Activated CD4-positive, alpha-beta T cell treated with anti-CD3 and anti-CD28 coated beads for 36 hours (primary cell): ENCODE measurements at regions of chr10 and their contacts with region 1.

Region 1: GRCh38 chr10:67849331-67850011 is 11.5 kb upstream of the DNAJC12 start:
- DNase-seq: peak; percentile 96
- ATAC-seq: peak; percentile 97
- H3K4me3 Mint-ChIP-seq: peak overlapping the region; percentile 86
- H3K27ac Mint-ChIP-seq: peak overlapping the region; percentile 95
- H3K4me1 Mint-ChIP-seq: peaks cover 12% of the 10 kb centered on the region
- H3K27me3 Mint-ChIP-seq: no peaks in the 10 kb centered on the region

Region 2: DNA sequence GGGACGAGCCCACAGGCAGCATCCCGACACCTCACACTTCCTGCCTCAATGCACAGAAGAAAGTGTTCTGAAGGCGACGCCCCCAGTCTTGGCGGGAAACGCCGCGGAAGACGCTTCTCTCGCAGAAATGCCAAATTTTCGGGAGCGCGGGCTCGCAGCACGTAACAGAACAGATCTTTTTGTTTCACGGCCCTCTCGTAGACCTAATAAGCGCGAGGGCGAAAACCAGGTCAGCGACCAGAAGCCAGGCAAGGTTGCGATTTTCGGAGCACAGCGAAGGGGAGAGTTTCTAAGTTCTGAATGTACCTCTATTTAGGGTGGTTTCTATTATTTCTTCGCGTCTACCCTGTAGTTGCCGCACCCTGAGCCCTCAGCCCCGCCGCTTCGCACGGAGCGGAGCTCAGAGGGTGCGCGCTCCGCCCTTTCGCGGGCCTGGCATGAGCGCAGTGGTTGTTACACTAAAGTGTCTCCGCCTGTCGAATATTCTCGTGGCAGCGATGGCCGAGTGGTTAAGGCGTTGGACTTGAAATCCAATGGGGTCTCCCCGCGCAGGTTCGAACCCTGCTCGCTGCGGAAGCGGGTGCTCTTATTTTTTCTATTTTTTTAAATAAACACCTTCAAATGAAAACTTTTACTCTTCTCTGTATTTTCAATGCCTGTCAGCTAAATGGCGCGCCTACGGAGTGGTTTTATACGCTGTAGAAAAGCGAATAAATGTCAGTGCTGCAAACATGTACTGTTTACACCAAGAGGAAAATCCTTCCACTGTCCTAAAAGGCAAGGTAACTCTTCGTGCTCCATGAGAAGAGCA is 85.3 kb before region 1 on chr10:
- CTCF ChIA-PET with region 1: no interaction called
- POLR2A ChIA-PET with region 1: no interaction called
- intact Hi-C with region 1: loop called (anchors 1 kb)
- DNase-seq: peak; percentile 96
- ATAC-seq: peak; percentile 86
- H3K4me3 Mint-ChIP-seq: peak overlapping the region; percentile 86
- H3K27ac Mint-ChIP-seq: peak overlapping the region; percentile 99
- H3K4me1 Mint-ChIP-seq: peaks cover 15% of the 10 kb centered on the region
- H3K27me3 Mint-ChIP-seq: peaks cover 2% of the 10 kb centered on the region

Region 3: GRCh38 chr10:67818320-67818719 is 31.2 kb before region 1 on chr10:
- CTCF ChIA-PET with region 1: interaction called, 6 read pairs
- POLR2A ChIA-PET with region 1: no interaction called
- intact Hi-C with region 1: loop called in 1 of 2 experiments (anchors 2 kb)
- DNase-seq: no peak
- ATAC-seq: peak; percentile 16
- H3K4me3 Mint-ChIP-seq: no peak overlapping the region
- H3K27ac Mint-ChIP-seq: no peak overlapping the region
- H3K4me1 Mint-ChIP-seq: peaks cover 29% of the 10 kb centered on the region
- H3K27me3 Mint-ChIP-seq: peaks cover 3% of the 10 kb centered on the region

Region 4: DNA sequence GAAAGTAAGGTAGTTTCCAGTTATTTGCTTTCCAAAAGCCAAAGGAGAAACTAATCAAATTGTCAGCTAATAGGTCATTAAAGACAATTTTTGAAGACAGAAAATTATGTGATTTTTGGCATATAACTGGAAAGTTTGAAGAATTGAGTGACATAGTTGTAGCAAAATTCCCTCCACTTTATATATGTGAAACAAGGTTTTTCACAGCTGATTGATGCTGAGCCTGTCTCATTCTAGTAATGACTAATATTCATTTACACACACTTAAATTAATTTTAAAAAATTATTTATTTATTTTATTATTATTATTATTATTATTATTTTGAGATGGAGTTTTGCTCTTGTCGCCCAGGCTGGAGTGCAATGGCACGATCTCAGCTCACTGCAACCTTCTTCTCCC is 18.7 kb after region 1 on chr10:
- CTCF ChIA-PET with region 1: interaction called, 17 read pairs
- POLR2A ChIA-PET with region 1: no interaction called
- intact Hi-C with region 1: no loop called
- DNase-seq: no peak
- ATAC-seq: no peak
- H3K4me3 Mint-ChIP-seq: no peak overlapping the region
- H3K27ac Mint-ChIP-seq: no peak overlapping the region
- H3K4me1 Mint-ChIP-seq: no peaks in the 10 kb centered on the region
- H3K27me3 Mint-ChIP-seq: no peaks in the 10 kb centered on the region

Region 5: GRCh38 chr10:67959839-67960476 is 110.5 kb after region 1 on chr10:
- CTCF ChIA-PET with region 1: no interaction called
- POLR2A ChIA-PET with region 1: no interaction called
- intact Hi-C with region 1: no loop called
- DNase-seq: no peak
- ATAC-seq: no peak
- H3K4me3 Mint-ChIP-seq: no peak overlapping the region
- H3K27ac Mint-ChIP-seq: no peak overlapping the region
- H3K4me1 Mint-ChIP-seq: no peaks in the 10 kb centered on the region
- H3K27me3 Mint-ChIP-seq: no peaks in the 10 kb centered on the region

Region 6: DNA sequence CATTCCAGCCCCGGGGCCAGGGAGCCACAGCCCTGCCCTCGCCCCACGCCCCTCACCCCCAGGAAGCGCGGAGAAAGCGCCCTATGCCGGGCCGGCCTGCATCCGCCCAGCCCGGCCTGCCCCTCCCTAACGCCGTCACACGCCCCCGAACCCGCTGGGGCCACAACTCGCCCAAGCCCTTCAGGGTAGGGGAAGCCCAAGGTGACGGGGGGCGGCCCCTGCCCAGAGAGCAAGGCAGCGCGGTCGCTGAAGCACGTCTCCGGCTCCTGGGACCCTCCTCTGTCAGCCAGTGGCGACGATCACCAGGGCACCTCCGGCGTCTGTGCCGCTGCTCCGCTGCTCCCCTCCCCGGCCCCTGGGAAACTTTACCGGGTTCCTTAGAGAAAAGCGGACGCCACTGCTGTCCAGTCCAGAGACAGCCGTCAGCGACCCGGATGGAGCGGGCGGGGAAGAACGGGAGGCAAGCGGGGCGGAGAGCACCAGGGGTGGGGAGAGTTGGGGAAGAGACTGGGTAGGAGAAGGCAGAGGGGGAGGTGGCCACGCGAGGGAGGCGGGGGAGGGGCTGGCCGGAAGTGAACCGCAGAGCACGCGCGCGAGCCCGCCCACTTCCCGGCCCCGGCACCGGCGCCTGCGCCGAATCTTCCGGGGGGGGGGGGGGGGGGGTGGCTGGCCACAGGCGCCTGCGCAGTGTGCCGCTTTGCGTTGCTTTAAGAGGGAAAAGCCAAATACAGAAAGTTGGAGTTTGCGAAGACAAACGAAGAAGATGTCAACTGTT is 225.5 kb after region 1 on chr10 and contains the start of gene HERC4:
- CTCF ChIA-PET with region 1: no interaction called
- POLR2A ChIA-PET with region 1: no interaction called
- intact Hi-C with region 1: loop called in 1 of 2 experiments (anchors 1 kb)
- DNase-seq: peak; percentile 94
- ATAC-seq: peak; percentile 83
- H3K4me3 Mint-ChIP-seq: peak within 1 kb of the TSS; percentile 98
- H3K27ac Mint-ChIP-seq: peak within 1 kb of the TSS; percentile 93
- H3K4me1 Mint-ChIP-seq: peaks cover 31% of the 10 kb centered on the region
- H3K27me3 Mint-ChIP-seq: no peaks in the 10 kb centered on the region
- total RNA-seq, gene HERC4: 39.5 to 50.8 TPM

Region 7: DNA sequence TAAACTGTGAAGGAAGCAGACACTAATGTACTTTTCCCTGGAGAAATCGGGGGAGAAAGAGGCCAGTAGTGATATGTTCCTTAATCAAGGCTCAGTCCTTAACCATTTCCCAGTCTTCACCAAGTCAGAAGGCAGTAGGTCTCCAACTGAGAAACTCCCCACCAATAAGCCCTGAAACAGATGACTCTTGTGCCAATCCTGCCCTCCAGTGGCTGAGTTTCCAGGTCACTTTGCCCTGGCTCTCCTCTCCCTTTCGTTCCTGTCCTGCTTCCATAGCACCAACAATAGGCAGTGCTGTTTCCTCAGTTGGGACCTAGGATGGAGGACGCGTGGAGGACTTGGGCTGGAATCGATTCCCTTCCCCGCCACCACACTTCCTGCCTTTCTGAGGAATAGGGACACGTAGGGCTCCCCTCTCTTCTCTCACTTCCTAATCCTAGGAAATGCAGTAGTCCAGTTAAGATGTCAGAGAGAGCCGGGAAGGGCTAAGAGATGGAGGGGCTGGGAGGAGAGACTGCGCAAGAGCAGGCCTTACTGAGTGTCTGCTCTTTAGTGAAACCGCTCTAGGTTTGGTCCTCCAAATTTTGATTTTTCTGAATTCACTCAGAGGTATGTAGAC is 359.1 kb after region 1 on chr10:
- CTCF ChIA-PET with region 1: interaction called, 16 read pairs
- POLR2A ChIA-PET with region 1: no interaction called
- intact Hi-C with region 1: loop called in 1 of 2 experiments (anchors 2 kb)
- DNase-seq: peak; percentile 53
- ATAC-seq: peak; percentile 49
- H3K4me3 Mint-ChIP-seq: no peak overlapping the region
- H3K27ac Mint-ChIP-seq: no peak overlapping the region
- H3K4me1 Mint-ChIP-seq: no peaks in the 10 kb centered on the region
- H3K27me3 Mint-ChIP-seq: peaks cover 9% of the 10 kb centered on the region